CD4-positive, alpha-beta memory T cell (primary cell): ENCODE measurements at regions of chr19 and their contacts with region 1.

Region 1: GRCh38 chr19:2151339-2152229 is at the start of gene AP3D1:
- DNase-seq: peak; percentile 100
- H3K4me3 ChIP-seq: peak within 1 kb of the TSS; percentile 42 to 83
- H3K4me3 Mint-ChIP-seq: peak within 1 kb of the TSS; percentile 76 to 89 (median 84)
- H3K27ac ChIP-seq: peak within 1 kb of the TSS; percentile 94
- H3K27ac Mint-ChIP-seq: peak within 1 kb of the TSS; percentile 89 to 98 (median 95)
- H3K4me1 ChIP-seq: peaks cover 42% of the 10 kb centered on the region
- H3K4me1 Mint-ChIP-seq: peaks cover 23 to 43% (median 35%) of the 10 kb centered on the region in 4 donors
- H3K27me3 ChIP-seq: no peaks in the 10 kb centered on the region
- H3K27me3 Mint-ChIP-seq: no peaks in the 10 kb centered on the region
- total RNA-seq, gene AP3D1: 80.6 to 87.2 TPM

Region 2: DNA sequence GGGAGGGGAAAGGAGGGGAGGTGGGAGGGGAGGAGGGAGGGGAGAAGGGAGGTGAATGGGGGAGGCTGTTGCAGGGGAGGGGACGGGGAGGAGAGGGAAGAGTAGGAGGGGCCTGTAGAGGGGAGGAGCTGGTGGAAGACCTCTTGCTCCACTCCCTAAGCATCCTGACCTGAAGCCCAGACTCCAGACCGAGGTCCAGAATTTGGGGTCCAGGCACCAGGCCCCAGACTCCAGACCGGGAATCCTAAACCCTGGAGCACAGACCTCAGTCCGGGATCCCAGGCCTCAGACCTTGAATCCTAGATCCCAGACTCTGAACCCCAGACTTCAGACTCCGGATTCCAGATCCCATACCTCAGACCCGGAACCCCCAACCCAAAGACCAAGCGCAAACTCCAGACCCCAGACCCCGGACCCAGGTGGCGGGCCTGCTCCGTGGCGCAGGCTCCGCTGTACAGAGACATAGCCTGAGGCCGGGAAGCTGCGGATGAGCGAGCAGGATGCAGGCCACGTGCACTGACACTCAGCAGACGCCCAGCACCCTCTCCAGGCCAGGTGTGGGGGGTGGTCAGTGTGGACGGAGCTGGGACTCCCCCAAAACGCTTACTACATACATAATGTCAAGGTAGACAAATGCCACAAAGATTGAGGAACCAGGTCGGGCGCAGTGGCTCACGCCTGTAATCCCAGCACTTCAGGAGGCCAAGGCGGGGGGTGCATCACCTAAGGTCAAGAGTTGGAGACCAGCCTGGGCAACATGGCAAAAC is 135.4 kb before region 1 on chr19:
- CTCF ChIA-PET with region 1: interaction called, 4 read pairs
- POLR2A ChIA-PET with region 1: interaction called, 4 read pairs
- intact Hi-C with region 1: loop called (anchors 1 kb)
- DNase-seq: peak; percentile 43 to 78 (median 55)
- H3K4me3 ChIP-seq: no peak overlapping the region
- H3K4me3 Mint-ChIP-seq: peak overlapping the region; percentile 43 to 65 (median 60)
- H3K27ac ChIP-seq: peak overlapping the region; percentile 18
- H3K27ac Mint-ChIP-seq: peak overlapping the region in 6 of 7 donors; percentile 36 to 91 (median 64)
- H3K4me1 ChIP-seq: peaks cover 16% of the 10 kb centered on the region
- H3K4me1 Mint-ChIP-seq: peaks cover 7 to 25% (median 16%) of the 10 kb centered on the region in 4 donors
- H3K27me3 ChIP-seq: no peaks in the 10 kb centered on the region
- H3K27me3 Mint-ChIP-seq: no peaks in the 10 kb centered on the region

Region 3: GRCh38 chr19:2084993-2085720 is 66.4 kb before region 1 on chr19:
- CTCF ChIA-PET with region 1: no interaction called
- POLR2A ChIA-PET with region 1: interaction called, 14 read pairs
- intact Hi-C with region 1: no loop called
- DNase-seq: peak; percentile 96 to 97 (median 97)
- H3K4me3 ChIP-seq: peak overlapping the region; percentile 80 to 97
- H3K4me3 Mint-ChIP-seq: peak overlapping the region; percentile 97 to 100 (median 99)
- H3K27ac ChIP-seq: peak overlapping the region; percentile 93
- H3K27ac Mint-ChIP-seq: peak overlapping the region; percentile 97 to 100 (median 99)
- H3K4me1 ChIP-seq: peaks cover 75% of the 10 kb centered on the region
- H3K4me1 Mint-ChIP-seq: peaks cover 45 to 85% (median 66%) of the 10 kb centered on the region in 4 donors
- H3K27me3 ChIP-seq: no peaks in the 10 kb centered on the region
- H3K27me3 Mint-ChIP-seq: peaks cover 0 to 2% of the 10 kb centered on the region in 2 donors

Region 4: GRCh38 chr19:2168619-2169424 is 17.2 kb after region 1 on chr19:
- CTCF ChIA-PET with region 1: interaction called, 24 read pairs
- POLR2A ChIA-PET with region 1: no interaction called
- intact Hi-C with region 1: no loop called
- DNase-seq: peak in 2 of 5 donors; percentile 22 to 72
- H3K4me3 ChIP-seq: no peak overlapping the region
- H3K4me3 Mint-ChIP-seq: peak overlapping the region in 6 of 8 donors; percentile 47 to 70 (median 61)
- H3K27ac ChIP-seq: peak overlapping the region; percentile 14
- H3K27ac Mint-ChIP-seq: peak overlapping the region in 6 of 7 donors; percentile 52 to 88 (median 72)
- H3K4me1 ChIP-seq: peaks cover 60% of the 10 kb centered on the region
- H3K4me1 Mint-ChIP-seq: peaks cover 11 to 65% (median 33%) of the 10 kb centered on the region in 4 donors
- H3K27me3 ChIP-seq: no peaks in the 10 kb centered on the region
- H3K27me3 Mint-ChIP-seq: no peaks in the 10 kb centered on the region

Region 5: GRCh38 chr19:2269244-2269947 is 117.8 kb after region 1 on chr19:
- CTCF ChIA-PET with region 1: interaction called, 17 read pairs
- POLR2A ChIA-PET with region 1: interaction called, 9 read pairs
- intact Hi-C with region 1: loop called (anchors 1 kb)
- DNase-seq: peak; percentile 98 to 99 (median 99)
- H3K4me3 ChIP-seq: peak overlapping the region; percentile 52 to 83
- H3K4me3 Mint-ChIP-seq: peak overlapping the region; percentile 88 to 95 (median 94)
- H3K27ac ChIP-seq: peak overlapping the region; percentile 91
- H3K27ac Mint-ChIP-seq: peak overlapping the region; percentile 86 to 99 (median 94)
- H3K4me1 ChIP-seq: peaks cover 52% of the 10 kb centered on the region
- H3K4me1 Mint-ChIP-seq: peaks cover 17 to 48% (median 34%) of the 10 kb centered on the region in 4 donors
- H3K27me3 ChIP-seq: no peaks in the 10 kb centered on the region
- H3K27me3 Mint-ChIP-seq: no peaks in the 10 kb centered on the region